ENCODE measurements at regions of chr2 and their contacts with region 1.

Region 1: GRCh38 chr2:69436938-69437750 is at the start of gene NFU1:
- DNase-seq: peak; percentile 68 to 94 (median 86)
- ATAC-seq: peak; percentile 82 to 86 (median 84)
- H3K4me3 ChIP-seq: peak within 1 kb of the TSS; percentile 79 to 83
- H3K4me3 Mint-ChIP-seq: peak within 1 kb of the TSS; percentile 83 to 97 (median 96)
- H3K27ac ChIP-seq: peak within 1 kb of the TSS; percentile 95
- H3K27ac Mint-ChIP-seq: peak within 1 kb of the TSS; percentile 98 to 99
- H3K4me1 ChIP-seq: peaks cover 11 to 28% of the 10 kb centered on the region in 2 experiments
- H3K4me1 Mint-ChIP-seq: peaks cover 41 to 44% (median 44%) of the 10 kb centered on the region in 3 donors
- H3K27me3 ChIP-seq: no peaks in the 10 kb centered on the region
- H3K27me3 Mint-ChIP-seq: no peaks in the 10 kb centered on the region
- total RNA-seq, gene NFU1: 20.6 to 31.9 (median 22.5) TPM

Region 2: DNA sequence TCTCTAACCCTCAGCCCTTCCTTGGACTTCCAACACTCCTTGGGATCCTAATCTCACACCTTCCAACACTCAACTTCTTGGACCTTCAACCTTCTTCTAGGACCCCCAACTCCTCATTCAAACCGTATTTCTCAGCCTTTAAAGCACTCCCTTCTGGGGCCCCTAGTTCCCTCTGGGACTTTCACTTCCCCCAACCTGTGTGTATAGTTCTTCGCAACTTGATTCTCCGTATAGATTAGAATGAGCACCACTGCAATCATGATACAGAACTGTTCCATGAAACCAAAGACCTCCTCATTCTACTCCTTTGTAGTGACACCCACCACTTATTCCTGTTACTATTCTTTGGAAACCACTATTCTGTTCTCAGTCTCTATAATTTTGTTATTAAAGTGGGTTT is 62.1 kb after region 1 on chr2:
- CTCF ChIA-PET with region 1: interaction called, 3 to 5 read pairs
- POLR2A ChIA-PET with region 1: interaction called, 11 read pairs
- DNase-seq: no peak
- ATAC-seq: no peak
- H3K4me3 ChIP-seq: no peak overlapping the region
- H3K4me3 Mint-ChIP-seq: no peak overlapping the region
- H3K27ac ChIP-seq: peak overlapping the region; percentile 39
- H3K27ac Mint-ChIP-seq: peak overlapping the region; percentile 77 to 90
- H3K4me1 ChIP-seq: peaks cover 5 to 13% of the 10 kb centered on the region in 2 experiments
- H3K4me1 Mint-ChIP-seq: peaks cover 27 to 29% (median 28%) of the 10 kb centered on the region in 3 donors
- H3K27me3 ChIP-seq: no peaks in the 10 kb centered on the region
- H3K27me3 Mint-ChIP-seq: no peaks in the 10 kb centered on the region

Region 3: GRCh38 chr2:69525261-69525660 is 88.1 kb after region 1 on chr2:
- CTCF ChIA-PET with region 1: no interaction called
- POLR2A ChIA-PET with region 1: interaction called in 1 of 2 experiments, 10 read pairs
- DNase-seq: no peak
- ATAC-seq: no peak
- H3K4me3 ChIP-seq: no peak overlapping the region
- H3K4me3 Mint-ChIP-seq: no peak overlapping the region
- H3K27ac ChIP-seq: no peak overlapping the region
- H3K27ac Mint-ChIP-seq: peak overlapping the region in 1 of 2 donors; percentile 0
- H3K4me1 ChIP-seq: no peaks in the 10 kb centered on the region
- H3K4me1 Mint-ChIP-seq: peaks cover 0 to 3% (median 0%) of the 10 kb centered on the region in 3 donors
- H3K27me3 ChIP-seq: no peaks in the 10 kb centered on the region
- H3K27me3 Mint-ChIP-seq: no peaks in the 10 kb centered on the region

Region 4: GRCh38 chr2:69741619-69742466 is 304.7 kb after region 1 on chr2 and contains the start of gene ANXA4:
- CTCF ChIA-PET with region 1: no interaction called
- POLR2A ChIA-PET with region 1: interaction called in 1 of 2 experiments, 10 read pairs
- DNase-seq: peak; percentile 7 to 71 (median 35)
- ATAC-seq: peak; percentile 83 to 93 (median 90)
- H3K4me3 ChIP-seq: peak within 1 kb of the TSS; percentile 79 to 82
- H3K4me3 Mint-ChIP-seq: peak within 1 kb of the TSS; percentile 92 to 96 (median 95)
- H3K27ac ChIP-seq: no peak within 1 kb of the TSS
- H3K27ac Mint-ChIP-seq: peak within 1 kb of the TSS; percentile 89 to 90
- H3K4me1 ChIP-seq: peaks cover 2 to 15% of the 10 kb centered on the region in 2 experiments
- H3K4me1 Mint-ChIP-seq: peaks cover 12 to 30% (median 17%) of the 10 kb centered on the region in 3 donors
- H3K27me3 ChIP-seq: peaks cover 0 to 3% of the 10 kb centered on the region in 2 experiments
- H3K27me3 Mint-ChIP-seq: no peaks in the 10 kb centered on the region
- total RNA-seq, gene ANXA4: 10.4 to 27.6 (median 20.0) TPM